Activated CD4-positive, alpha-beta T cell treated with anti-CD3 and anti-CD28 coated beads, Interleukin-2, amount 10 ng/mL, durations not matched to agents 24 days and 14 days (primary cell): ENCODE measurements at regions of chr17 and their contacts with region 1.

Region 1: DNA sequence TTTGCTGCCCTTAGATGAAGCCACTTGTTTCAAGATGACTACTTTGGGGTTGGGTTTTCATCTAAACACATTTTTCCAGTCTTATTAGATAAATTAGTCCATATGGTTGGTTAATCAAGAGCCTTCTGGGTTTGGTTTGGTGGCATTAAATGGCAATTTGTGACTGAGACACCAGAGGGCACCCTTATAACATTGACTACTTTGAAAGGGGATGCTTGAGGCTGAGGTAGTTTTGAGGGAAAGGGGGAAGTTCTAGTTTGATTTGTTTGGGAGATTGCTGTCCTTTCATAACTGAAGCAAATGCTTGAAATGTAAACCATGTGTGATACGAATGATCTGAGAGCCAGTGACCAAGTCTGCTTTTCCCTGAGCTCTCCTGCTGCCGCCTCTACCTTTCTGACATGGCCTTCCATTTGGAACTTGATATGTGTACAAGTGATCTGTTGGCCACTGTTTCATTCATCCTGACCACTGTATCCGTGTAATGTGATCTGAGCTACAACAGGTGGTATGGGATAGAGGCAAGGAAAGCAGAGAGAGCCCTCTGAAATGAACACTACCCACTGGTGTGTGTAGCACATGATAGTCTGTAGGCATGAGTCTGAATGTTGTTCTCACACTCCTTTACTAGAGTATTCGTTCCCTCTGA is 5.8 kb upstream of the RARA start:
- DNase-seq: peak; percentile 87
- H3K4me3 Mint-ChIP-seq: no peak overlapping the region
- H3K27ac Mint-ChIP-seq: peak overlapping the region; percentile 29
- H3K4me1 Mint-ChIP-seq: peaks cover 16% of the 10 kb centered on the region
- H3K27me3 Mint-ChIP-seq: no peaks in the 10 kb centered on the region

Region 2: GRCh38 chr17:40264458-40265185 is 38.5 kb before region 1 on chr17:
- intact Hi-C with region 1: no loop called
- DNase-seq: no peak
- H3K4me3 Mint-ChIP-seq: no peak overlapping the region
- H3K27ac Mint-ChIP-seq: no peak overlapping the region
- H3K4me1 Mint-ChIP-seq: peaks cover 8% of the 10 kb centered on the region
- H3K27me3 Mint-ChIP-seq: no peaks in the 10 kb centered on the region

Region 3: GRCh38 chr17:40355123-40355803 is 52.1 kb after region 1 on chr17:
- intact Hi-C with region 1: loop called (anchors 1 kb)
- DNase-seq: peak; percentile 94
- H3K4me3 Mint-ChIP-seq: no peak overlapping the region
- H3K27ac Mint-ChIP-seq: no peak overlapping the region
- H3K4me1 Mint-ChIP-seq: peaks cover 17% of the 10 kb centered on the region
- H3K27me3 Mint-ChIP-seq: no peaks in the 10 kb centered on the region

Region 4: DNA sequence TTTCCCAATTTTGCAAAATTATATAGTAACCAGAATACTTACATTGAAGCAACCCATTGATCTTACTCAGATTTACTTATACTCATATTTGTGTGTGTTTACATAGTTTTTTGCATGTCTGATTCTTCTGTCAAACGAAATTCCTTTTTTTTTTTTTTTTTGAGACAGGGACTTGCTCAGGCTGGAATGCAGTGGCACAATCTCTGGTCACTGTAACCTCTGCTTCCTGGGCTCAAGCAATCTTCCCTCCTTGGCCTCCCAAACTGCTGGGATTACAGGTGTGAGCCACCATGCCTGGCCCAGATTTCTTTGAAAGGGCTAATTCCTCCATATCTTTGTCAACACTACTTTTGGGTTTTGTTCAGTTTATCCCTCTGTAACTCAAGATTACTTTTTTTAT is 84.5 kb after region 1 on chr17:
- intact Hi-C with region 1: no loop called
- DNase-seq: no peak
- H3K4me3 Mint-ChIP-seq: no peak overlapping the region
- H3K27ac Mint-ChIP-seq: no peak overlapping the region
- H3K4me1 Mint-ChIP-seq: peaks cover 5% of the 10 kb centered on the region
- H3K27me3 Mint-ChIP-seq: no peaks in the 10 kb centered on the region

Region 5: DNA sequence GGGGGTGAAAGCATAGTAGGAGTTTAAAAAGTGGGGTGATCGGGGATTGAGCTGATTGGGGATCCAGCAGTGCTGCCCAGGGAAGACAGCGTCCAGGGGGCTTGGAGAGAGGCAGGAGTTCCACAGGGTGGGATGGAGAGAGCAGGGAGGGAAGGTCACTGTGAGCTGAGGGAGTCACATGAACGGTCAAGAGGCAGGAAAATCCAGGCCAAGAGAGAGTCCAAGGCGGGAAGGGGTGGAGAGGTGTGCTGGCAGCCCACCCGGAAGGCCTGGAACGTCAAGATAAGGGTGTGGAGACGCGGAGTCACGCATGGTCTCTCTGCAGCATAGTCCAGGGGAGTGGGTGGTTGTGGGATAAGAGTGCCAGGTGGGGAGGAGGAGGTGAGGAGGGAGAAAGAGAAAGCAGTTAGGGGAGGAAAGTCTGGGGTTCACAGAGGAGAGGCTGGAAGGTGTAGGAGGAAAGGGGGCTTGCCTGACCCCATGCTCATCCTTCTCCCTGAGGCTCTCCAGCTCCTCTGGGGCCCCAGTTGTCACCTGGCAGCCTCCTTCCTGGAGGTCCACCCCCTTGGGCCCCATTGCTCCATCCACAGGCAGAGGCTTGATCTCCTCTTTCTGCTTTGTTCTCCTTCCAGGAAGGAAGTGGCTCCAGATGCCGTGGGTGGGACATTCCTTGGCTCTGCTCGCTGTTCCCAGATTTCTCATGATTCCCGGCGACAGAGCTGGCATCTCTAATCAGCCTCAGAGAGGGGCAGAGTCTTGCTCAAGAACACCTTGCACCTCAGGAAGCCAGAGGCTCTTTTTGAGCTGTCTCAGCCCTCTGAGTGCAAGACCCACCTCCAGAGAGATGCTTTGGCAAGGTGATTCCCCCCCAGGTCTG is 233.4 kb after region 1 on chr17:
- intact Hi-C with region 1: loop called (anchors 10 kb)
- DNase-seq: no peak
- H3K4me3 Mint-ChIP-seq: peak overlapping the region; percentile 18
- H3K27ac Mint-ChIP-seq: peak overlapping the region; percentile 73
- H3K4me1 Mint-ChIP-seq: peaks cover 88% of the 10 kb centered on the region
- H3K27me3 Mint-ChIP-seq: peaks cover 2% of the 10 kb centered on the region